PC-3 (cell line): ENCODE measurements at regions of chr1 and their contacts with region 1.

Region 1: GRCh38 chr1:180154325-180155181 is at the start of gene QSOX1:
- DNase-seq: peak; percentile 77
- ATAC-seq: peak; percentile 54
- H3K4me3 ChIP-seq: peak within 1 kb of the TSS; percentile 99
- H3K27ac ChIP-seq: peak within 1 kb of the TSS; percentile 99
- H3K4me1 ChIP-seq: peaks cover 62% of the 10 kb centered on the region
- H3K27me3 ChIP-seq: no peaks in the 10 kb centered on the region
- CTCF ChIP-seq: no peak
- total RNA-seq, gene QSOX1: 192 and 237 TPM in 2 replicates

Region 2: DNA sequence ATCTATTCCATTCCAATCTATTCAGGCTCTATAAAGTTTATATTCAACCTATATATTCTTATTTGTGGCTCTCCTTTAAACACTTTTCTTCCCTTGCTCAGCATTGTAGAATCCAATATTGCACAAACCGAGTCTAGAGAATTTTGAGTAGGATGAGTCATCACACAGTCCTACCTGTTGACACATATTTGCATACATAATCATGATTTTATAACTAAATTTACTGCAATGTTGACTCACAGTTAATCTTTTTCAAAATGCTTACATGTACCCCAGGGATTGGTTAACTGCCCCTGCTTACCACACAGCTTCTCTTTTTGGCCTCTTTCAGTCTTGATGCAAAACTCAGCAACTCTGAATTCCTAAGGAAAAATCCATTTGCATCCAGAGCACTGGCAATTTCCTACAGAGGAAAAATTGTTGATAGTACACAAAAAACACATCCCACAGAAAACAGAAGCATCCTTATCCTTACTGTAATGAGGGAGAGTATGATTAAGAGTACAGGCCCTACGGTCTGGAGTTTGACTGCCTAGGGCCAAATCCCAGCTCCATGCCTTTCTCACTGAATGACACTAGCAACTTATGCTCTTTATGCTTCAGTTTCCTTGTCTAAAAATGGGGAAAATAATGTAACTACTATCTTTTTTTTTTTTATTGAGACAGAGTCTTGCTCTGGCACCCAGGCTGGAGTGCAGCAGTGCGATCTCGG is 227.9 kb before region 1 on chr1:
- CTCF ChIA-PET with region 1: no interaction called
- POLR2A ChIA-PET with region 1: interaction called, 15 read pairs
- intact Hi-C with region 1: no loop called
- DNase-seq: peak; percentile 70
- ATAC-seq: peak; percentile 86
- H3K4me3 ChIP-seq: no peak overlapping the region
- H3K27ac ChIP-seq: peak overlapping the region; percentile 45
- H3K4me1 ChIP-seq: peaks cover 14% of the 10 kb centered on the region
- H3K27me3 ChIP-seq: no peaks in the 10 kb centered on the region
- CTCF ChIP-seq: no peak

Region 3: DNA sequence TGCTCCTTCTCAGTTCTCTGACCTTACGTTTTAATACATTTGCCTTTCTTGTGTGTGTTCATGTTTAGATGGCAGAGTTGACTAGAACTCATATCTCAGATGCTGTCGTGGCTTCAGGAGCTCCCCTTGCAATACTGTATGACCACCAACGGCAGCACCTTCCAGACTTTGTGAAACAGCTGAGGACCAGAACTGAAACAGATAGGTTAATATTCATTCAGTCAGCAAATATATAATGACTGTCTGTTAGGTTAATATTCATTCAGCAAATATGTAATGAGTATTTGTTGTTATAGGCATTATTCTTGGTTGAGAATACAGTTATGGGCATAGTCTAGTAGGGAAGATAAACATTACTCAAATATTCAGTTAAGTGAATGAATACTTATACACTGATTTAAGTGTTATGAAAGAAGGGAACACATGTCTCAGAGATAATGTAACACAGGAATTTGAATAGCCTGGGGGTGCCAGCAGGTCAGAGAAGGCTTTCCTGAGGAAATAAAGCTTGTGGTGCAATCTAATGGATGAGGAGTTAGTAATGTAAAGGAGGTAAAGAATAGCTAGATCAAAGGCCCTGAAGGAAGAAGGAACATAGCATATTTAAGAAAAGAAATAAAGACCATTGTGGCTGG is 111.4 kb before region 1 on chr1:
- CTCF ChIA-PET with region 1: no interaction called
- POLR2A ChIA-PET with region 1: no interaction called
- intact Hi-C with region 1: loop called (anchors 1 kb)
- DNase-seq: peak; percentile 62
- ATAC-seq: peak; percentile 64
- H3K4me3 ChIP-seq: no peak overlapping the region
- H3K27ac ChIP-seq: peak overlapping the region; percentile 49
- H3K4me1 ChIP-seq: peaks cover 24% of the 10 kb centered on the region
- H3K27me3 ChIP-seq: no peaks in the 10 kb centered on the region
- CTCF ChIP-seq: no peak

Region 4: DNA sequence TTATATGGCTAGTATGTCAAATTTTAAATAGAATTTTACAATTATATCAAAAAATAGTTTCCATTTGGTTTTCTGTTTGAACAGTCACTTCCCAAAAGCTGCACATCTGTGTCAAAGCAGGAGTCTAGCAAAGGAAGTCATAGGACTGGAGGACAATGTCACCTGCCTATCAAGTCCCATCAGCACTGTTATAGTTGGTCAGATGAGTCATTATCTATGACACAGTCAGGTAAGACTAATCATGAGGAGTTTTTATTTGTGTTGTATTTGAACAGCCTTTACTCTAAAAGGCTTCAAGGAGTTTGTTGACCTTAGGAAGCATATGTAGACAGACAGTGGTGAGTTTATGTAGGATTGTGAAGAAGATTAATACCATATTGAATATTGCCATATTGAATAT is 74.1 kb before region 1 on chr1:
- CTCF ChIA-PET with region 1: no interaction called
- POLR2A ChIA-PET with region 1: no interaction called
- intact Hi-C with region 1: loop called (anchors 1 kb)
- DNase-seq: peak; percentile 82
- ATAC-seq: peak; percentile 93
- H3K4me3 ChIP-seq: no peak overlapping the region
- H3K27ac ChIP-seq: peak overlapping the region; percentile 58
- H3K4me1 ChIP-seq: peaks cover 26% of the 10 kb centered on the region
- H3K27me3 ChIP-seq: no peaks in the 10 kb centered on the region
- CTCF ChIP-seq: no peak

Region 5: DNA sequence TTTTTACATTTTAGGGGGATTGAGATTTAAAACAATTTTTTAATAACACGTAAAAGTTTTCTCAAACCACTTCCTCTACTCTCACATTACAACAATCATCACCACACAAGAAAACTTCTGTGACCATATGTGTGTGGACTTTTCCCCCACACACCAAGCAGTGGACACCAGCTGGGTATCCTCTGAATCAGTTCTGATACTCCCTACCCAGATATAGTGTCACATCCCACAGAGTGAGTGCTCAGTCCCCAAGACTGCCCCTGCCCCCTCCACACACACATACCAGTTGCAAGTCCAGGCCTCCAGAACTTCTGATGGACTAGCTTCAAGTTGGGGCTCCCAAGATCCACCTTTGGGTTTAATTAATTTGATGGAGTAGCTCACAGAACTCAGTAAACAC is 53.1 kb before region 1 on chr1:
- CTCF ChIA-PET with region 1: no interaction called
- POLR2A ChIA-PET with region 1: interaction called, 10 read pairs
- intact Hi-C with region 1: loop called (anchors 1 kb)
- DNase-seq: no peak
- ATAC-seq: no peak
- H3K4me3 ChIP-seq: no peak overlapping the region
- H3K27ac ChIP-seq: no peak overlapping the region
- H3K4me1 ChIP-seq: peaks cover 9% of the 10 kb centered on the region
- H3K27me3 ChIP-seq: no peaks in the 10 kb centered on the region
- CTCF ChIP-seq: no peak

Region 6: DNA sequence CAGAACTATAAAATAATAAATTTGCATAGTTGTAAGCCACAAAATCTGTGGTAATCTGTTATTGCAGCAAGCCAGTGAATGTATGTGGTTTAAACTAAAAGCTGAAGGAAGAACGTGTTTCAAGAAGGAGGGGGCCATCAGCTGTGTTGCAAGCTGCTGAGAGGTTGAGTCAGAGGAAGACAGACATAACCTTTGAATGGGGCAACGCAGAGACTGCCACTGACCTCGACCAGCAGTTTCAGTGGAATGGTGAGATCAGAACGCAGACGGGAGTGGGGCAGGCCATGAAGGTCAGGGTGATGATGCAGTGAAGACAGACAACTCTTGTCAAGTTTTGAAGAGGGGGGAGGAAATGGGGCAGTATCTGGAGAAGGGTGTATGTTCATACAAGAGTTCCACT is 23.0 kb before region 1 on chr1:
- CTCF ChIA-PET with region 1: interaction called, 3 read pairs
- POLR2A ChIA-PET with region 1: interaction called, 17 read pairs
- intact Hi-C with region 1: loop called (anchors 1 kb)
- DNase-seq: no peak
- ATAC-seq: no peak
- H3K4me3 ChIP-seq: no peak overlapping the region
- H3K27ac ChIP-seq: no peak overlapping the region
- H3K4me1 ChIP-seq: peaks cover 20% of the 10 kb centered on the region
- H3K27me3 ChIP-seq: no peaks in the 10 kb centered on the region
- CTCF ChIP-seq: no peak

Region 7: GRCh38 chr1:180198196-180198595 is 43.6 kb after region 1 on chr1:
- CTCF ChIA-PET with region 1: no interaction called
- POLR2A ChIA-PET with region 1: no interaction called
- intact Hi-C with region 1: no loop called
- DNase-seq: no peak
- ATAC-seq: peak; percentile 9; the same call in 1 of the 2 replicates
- H3K4me3 ChIP-seq: no peak overlapping the region
- H3K27ac ChIP-seq: no peak overlapping the region
- H3K4me1 ChIP-seq: no peaks in the 10 kb centered on the region
- H3K27me3 ChIP-seq: no peaks in the 10 kb centered on the region
- CTCF ChIP-seq: no peak

Region 8: DNA sequence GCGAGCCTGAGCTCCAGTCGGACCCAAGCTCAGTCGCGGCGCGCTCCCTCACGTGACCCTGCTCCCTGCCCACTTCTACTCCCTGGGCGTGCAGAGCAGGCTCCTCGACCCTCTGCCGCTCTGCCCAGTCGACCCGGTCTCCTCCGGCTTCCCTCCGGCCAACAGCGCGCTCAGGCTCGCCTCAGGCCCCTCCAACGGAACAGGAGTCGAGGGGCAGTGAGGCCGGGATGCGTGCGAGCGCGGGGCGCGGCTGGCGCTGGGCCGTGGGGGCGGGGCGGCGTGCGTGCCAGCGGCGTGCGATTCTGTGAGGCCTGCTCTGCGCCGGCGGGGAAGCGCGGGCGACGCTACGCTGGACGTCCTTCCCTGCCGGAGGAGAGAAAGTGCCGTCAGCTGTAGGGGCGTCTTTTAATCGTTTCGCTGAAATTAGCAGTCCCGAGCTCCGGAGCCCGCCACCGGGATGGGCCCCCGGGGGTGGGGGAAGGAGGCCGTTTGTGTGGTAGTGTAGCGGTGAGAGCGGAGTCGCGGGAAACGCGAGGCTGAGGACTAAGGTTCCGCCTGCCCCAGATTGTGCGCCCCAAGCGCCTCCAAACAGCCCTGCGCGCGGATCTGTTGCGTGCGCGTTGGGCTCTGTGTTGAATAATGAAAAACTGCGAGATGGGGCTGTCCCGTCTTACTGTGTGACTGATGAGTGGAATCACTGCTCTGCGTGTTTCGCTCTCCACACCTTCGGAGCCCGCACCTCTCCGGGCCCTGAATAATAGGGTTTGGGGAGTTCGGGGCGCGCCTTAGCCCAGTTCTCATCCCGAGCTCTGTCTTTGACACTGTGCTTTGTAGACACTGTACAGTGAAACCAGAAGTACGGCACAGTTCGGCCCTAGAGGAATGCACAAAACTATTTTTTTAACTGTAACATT is 348.1 kb after region 1 on chr1 and contains the start of gene ACBD6:
- CTCF ChIA-PET with region 1: no interaction called
- POLR2A ChIA-PET with region 1: no interaction called
- intact Hi-C with region 1: no loop called
- DNase-seq: peak; percentile 78
- ATAC-seq: peak; percentile 90
- H3K4me3 ChIP-seq: peak within 1 kb of the TSS; percentile 95
- H3K27ac ChIP-seq: peak within 1 kb of the TSS; percentile 94
- H3K4me1 ChIP-seq: peaks cover 19% of the 10 kb centered on the region
- H3K27me3 ChIP-seq: no peaks in the 10 kb centered on the region
- CTCF ChIP-seq: no peak
- total RNA-seq, gene ACBD6: 43.3 and 69.6 TPM in 2 replicates